Cardiac septum (tissue), 1 donor: ENCODE measurements at regions of chr4 and their contacts with region 1.

Region 1: GRCh38 chr4:83034630-83035494 is at the start of gene COPS4:
- DNase-seq: peak; percentile 98
- total RNA-seq, gene COPS4: 47.1 TPM

Region 2: DNA sequence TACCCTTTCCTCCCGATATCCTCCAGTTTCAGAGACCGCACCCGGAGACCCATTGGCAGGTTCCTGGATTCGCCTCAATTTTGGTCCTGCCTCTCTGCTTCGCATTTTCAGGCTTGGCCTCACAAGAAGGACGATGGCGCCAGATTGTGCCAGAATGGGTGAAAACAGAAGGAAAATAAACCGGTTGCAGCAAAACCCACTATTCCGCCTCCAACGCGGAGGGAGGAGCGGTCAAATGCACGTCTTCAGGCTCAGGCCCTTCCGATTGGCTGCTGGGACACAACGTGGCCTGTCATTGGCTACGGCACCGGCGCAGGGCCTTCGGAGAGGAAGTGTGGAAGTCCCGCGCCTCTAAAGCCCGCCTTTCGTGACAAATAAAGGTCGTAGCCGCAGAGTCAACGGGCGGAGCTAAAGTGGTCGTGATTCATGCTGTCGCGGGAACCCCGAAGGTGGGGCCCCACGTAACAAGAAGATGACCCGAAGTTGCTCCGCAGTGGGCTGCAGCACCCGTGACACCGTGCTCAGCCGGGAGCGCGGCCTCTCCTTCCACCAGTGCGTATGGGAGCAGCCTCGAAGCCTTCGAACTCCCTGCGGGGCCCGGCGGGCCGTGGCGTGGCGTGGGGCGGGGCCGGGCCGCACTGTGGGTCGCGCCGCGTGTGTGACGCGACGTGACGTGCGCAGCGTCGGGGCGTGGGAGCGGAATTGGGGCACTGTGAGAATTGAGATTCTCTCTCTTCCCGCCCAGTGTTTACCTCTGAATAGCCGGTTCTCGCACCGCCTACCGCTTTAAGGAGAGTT is 134.3 kb before region 1 on chr4 and contains the start of gene THAP9:
- intact Hi-C with region 1: loop called (anchors 1 kb)
- DNase-seq: peak; percentile 100
- total RNA-seq, gene THAP9: 6.0 TPM